CD8-positive, alpha-beta T cell (primary cell): ENCODE measurements at regions of chr12 and their contacts with region 1.

Region 1: DNA sequence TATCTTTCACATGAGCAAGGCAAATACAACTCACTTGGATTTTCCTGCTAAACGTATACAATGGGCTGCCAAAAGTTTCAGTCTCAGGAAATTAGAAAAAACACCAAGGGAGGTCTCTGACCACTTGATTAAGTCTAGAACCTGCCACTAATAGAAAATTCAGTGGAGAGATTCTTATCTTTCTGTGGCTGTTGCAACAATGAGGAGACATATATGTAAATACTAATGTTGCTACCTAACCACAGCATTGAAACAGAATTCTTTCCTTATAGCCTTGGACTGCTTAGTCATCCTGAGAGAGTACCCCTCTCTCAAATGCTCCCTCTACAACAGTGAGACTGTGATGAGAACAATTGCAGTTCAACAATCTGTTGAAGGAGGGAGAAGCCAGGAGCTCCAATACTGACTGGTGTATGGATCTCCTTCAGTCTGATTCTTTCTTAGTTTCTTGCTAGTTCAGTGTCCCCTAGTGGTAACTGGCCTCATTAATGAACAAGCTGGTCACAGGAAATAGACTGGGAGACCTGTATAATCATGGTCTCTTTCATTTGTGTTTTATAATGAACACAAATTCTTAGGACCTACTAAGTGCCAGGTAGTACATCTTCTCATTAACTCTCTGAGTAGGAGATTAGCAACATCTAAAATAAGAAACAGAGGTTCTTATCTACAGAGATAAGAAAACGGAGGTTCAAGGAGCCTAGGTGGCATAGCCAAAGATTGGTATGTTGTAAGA is 164.5 kb downstream of the SLC38A4 start:
- DNase-seq: peak in 2 of 9 experiments; percentile 60 to 72
- ATAC-seq: peak; percentile 69
- H3K4me3 ChIP-seq: no peak overlapping the region
- H3K4me3 Mint-ChIP-seq: no peak overlapping the region
- H3K27ac ChIP-seq: no peak overlapping the region
- H3K27ac Mint-ChIP-seq: no peak overlapping the region
- H3K4me1 ChIP-seq: peaks cover 6% of the 10 kb centered on the region
- H3K4me1 Mint-ChIP-seq: peaks cover 28% of the 10 kb centered on the region
- H3K27me3 ChIP-seq: no peaks in the 10 kb centered on the region
- H3K27me3 Mint-ChIP-seq: no peaks in the 10 kb centered on the region
- CTCF ChIP-seq: peak; percentile 61

Region 2: GRCh38 chr12:46153268-46153872 is 507.9 kb before region 1 on chr12:
- CTCF ChIA-PET with region 1: no interaction called
- POLR2A ChIA-PET with region 1: no interaction called
- intact Hi-C with region 1: loop called in 1 of 2 experiments (anchors 5 kb)
- DNase-seq: peak in 2 of 9 experiments; percentile 40 to 65
- ATAC-seq: no peak
- H3K4me3 ChIP-seq: no peak overlapping the region
- H3K4me3 Mint-ChIP-seq: no peak overlapping the region
- H3K27ac ChIP-seq: no peak overlapping the region
- H3K27ac Mint-ChIP-seq: no peak overlapping the region
- H3K4me1 ChIP-seq: peaks cover 13% of the 10 kb centered on the region
- H3K4me1 Mint-ChIP-seq: peaks cover 19% of the 10 kb centered on the region
- H3K27me3 ChIP-seq: no peaks in the 10 kb centered on the region
- H3K27me3 Mint-ChIP-seq: peaks cover 1% of the 10 kb centered on the region
- CTCF ChIP-seq: peak; percentile 97

Region 3: GRCh38 chr12:46450279-46450748 is 211.0 kb before region 1 on chr12:
- CTCF ChIA-PET with region 1: no interaction called
- POLR2A ChIA-PET with region 1: no interaction called
- intact Hi-C with region 1: loop called in 1 of 2 experiments (anchors 5 kb)
- DNase-seq: no peak
- ATAC-seq: no peak
- H3K4me3 ChIP-seq: no peak overlapping the region
- H3K4me3 Mint-ChIP-seq: no peak overlapping the region
- H3K27ac ChIP-seq: no peak overlapping the region
- H3K27ac Mint-ChIP-seq: no peak overlapping the region
- H3K4me1 ChIP-seq: peaks cover 31% of the 10 kb centered on the region
- H3K4me1 Mint-ChIP-seq: peaks cover 36% of the 10 kb centered on the region
- H3K27me3 ChIP-seq: no peaks in the 10 kb centered on the region
- H3K27me3 Mint-ChIP-seq: no peaks in the 10 kb centered on the region
- CTCF ChIP-seq: no peak

Region 4: GRCh38 chr12:46516933-46517578 is 144.2 kb before region 1 on chr12:
- CTCF ChIA-PET with region 1: interaction called, 3 read pairs
- POLR2A ChIA-PET with region 1: no interaction called
- intact Hi-C with region 1: loop called in 1 of 2 experiments (anchors 1 kb)
- DNase-seq: peak in 1 of 9 experiments; percentile 24
- ATAC-seq: no peak
- H3K4me3 ChIP-seq: no peak overlapping the region
- H3K4me3 Mint-ChIP-seq: peak overlapping the region; percentile 33
- H3K27ac ChIP-seq: no peak overlapping the region
- H3K27ac Mint-ChIP-seq: peak overlapping the region; percentile 64
- H3K4me1 ChIP-seq: peaks cover 22% of the 10 kb centered on the region
- H3K4me1 Mint-ChIP-seq: peaks cover 50% of the 10 kb centered on the region
- H3K27me3 ChIP-seq: no peaks in the 10 kb centered on the region
- H3K27me3 Mint-ChIP-seq: no peaks in the 10 kb centered on the region
- CTCF ChIP-seq: no peak

Region 5: DNA sequence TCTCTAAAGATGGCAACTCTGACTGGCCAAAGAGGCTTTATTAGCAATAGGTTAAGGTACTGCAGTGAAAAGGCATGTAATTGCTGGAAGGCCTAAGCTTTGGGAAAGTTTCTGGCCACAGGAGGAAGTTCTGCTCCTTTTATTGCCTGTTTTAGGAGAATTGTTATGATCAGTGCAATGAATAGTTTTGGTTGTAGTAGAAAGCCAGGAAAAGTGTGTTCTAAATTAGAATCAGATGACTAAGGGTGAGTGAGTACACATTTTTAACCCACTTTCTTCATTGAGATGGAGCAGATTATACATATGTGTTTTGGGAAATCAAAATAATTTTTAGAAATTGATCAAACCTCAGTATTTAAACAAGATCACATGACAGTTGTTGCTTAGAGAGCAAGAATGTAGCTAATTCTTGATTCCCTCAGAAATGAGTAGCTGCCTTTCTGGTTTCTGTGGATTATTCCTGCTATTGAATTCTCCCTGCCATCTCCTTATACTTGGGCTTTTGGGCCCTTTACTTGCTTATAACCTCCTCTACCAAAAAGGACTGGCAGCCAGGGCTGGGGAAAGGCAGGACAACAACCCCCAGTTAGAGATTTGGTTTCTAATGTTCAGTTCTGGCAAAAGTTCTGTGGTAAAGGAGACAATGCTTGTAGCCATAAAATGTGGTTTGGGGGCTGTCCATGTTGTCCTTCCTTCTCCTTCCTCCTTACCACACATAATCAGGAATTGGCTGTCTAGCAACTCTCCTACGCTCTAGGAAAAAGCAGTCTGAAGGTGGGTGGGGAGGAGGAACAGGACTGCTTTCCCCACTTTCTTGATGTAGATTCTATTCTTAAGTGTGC is 52.6 kb before region 1 on chr12:
- CTCF ChIA-PET with region 1: interaction called, 3 read pairs
- POLR2A ChIA-PET with region 1: no interaction called
- intact Hi-C with region 1: loop called in 1 of 2 experiments (anchors 2 kb)
- DNase-seq: no peak
- ATAC-seq: no peak
- H3K4me3 ChIP-seq: no peak overlapping the region
- H3K4me3 Mint-ChIP-seq: peak overlapping the region; percentile 58
- H3K27ac ChIP-seq: peak overlapping the region in 1 of 2 experiments; percentile 22
- H3K27ac Mint-ChIP-seq: peak overlapping the region; percentile 65
- H3K4me1 ChIP-seq: peaks cover 30% of the 10 kb centered on the region
- H3K4me1 Mint-ChIP-seq: peaks cover 46% of the 10 kb centered on the region
- H3K27me3 ChIP-seq: no peaks in the 10 kb centered on the region
- H3K27me3 Mint-ChIP-seq: no peaks in the 10 kb centered on the region
- CTCF ChIP-seq: no peak